Activated naive CD4-positive, alpha-beta T cell treated with anti-CD3 and anti-CD28 coated beads for 36 hours (primary cell): ENCODE measurements at regions of chr14 and their contacts with region 1.

Region 1: GRCh38 chr14:32202998-32203882 is at the start of gene RNU6-8:
- DNase-seq: peak; percentile 86
- H3K4me3 Mint-ChIP-seq: peak within 1 kb of the TSS; percentile 89
- H3K27ac Mint-ChIP-seq: peak within 1 kb of the TSS; percentile 99
- H3K4me1 Mint-ChIP-seq: peaks cover 35% of the 10 kb centered on the region
- H3K27me3 Mint-ChIP-seq: no peaks in the 10 kb centered on the region
- total RNA-seq, gene RNU6-8: not detected

Region 2: GRCh38 chr14:31388687-31389413 is 814.4 kb before region 1 on chr14:
- CTCF ChIA-PET with region 1: no interaction called
- intact Hi-C with region 1: loop called (anchors 10 kb)
- DNase-seq: peak; percentile 17
- H3K4me3 Mint-ChIP-seq: no peak overlapping the region
- H3K27ac Mint-ChIP-seq: no peak overlapping the region
- H3K4me1 Mint-ChIP-seq: peaks cover 25% of the 10 kb centered on the region
- H3K27me3 Mint-ChIP-seq: no peaks in the 10 kb centered on the region

Region 3: DNA sequence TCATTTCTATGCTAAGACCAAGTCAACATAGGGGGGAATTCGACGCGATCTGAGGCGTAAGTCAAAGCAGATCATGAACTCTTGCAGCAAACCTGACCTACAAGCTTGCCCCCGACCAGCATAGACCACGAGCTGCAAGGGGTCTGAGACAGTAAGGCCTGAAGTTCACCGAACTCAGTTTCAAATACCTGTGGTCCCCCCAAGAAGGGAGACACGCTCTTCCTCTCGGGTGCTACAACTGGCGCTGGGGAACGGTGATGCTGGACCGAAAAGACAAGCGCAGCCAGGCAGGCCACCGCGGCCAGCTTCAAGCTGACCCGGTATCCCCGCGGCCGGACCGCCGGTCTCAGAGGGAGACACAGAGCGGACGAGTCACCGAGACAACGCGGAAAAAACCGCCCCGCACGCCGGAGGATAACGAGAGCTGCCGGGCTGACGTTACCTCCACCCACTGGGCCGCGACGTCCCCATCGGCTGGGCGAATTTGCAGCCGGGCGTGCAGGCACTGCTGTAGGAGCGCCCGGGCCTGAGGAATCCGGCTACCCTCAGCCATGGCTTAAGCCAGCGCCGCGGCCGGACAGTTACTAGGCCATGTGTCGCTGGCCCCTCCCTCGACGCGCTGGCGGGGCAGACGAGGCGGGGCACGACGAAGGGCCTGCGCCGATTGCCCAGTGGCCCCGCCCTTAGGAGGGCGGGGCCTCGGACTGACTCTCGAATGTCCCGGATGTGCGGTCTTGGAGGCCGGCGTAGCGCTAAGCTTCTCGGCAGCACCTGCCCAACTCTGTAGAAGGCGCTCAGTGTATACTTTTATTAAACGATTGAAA is 746.2 kb before region 1 on chr14 and contains the start of gene DTD2:
- CTCF ChIA-PET with region 1: no interaction called
- intact Hi-C with region 1: loop called (anchors 1 kb)
- DNase-seq: peak; percentile 93
- H3K4me3 Mint-ChIP-seq: peak within 1 kb of the TSS; percentile 94
- H3K27ac Mint-ChIP-seq: peak within 1 kb of the TSS; percentile 88
- H3K4me1 Mint-ChIP-seq: peaks cover 29% of the 10 kb centered on the region
- H3K27me3 Mint-ChIP-seq: no peaks in the 10 kb centered on the region
- total RNA-seq, gene DTD2: 12.9 to 13.3 TPM

Region 4: GRCh38 chr14:31926123-31926522 is 277.1 kb before region 1 on chr14:
- CTCF ChIA-PET with region 1: interaction called, 3 read pairs
- intact Hi-C with region 1: loop called (anchors 1 kb)
- DNase-seq: peak; percentile 28
- H3K4me3 Mint-ChIP-seq: no peak overlapping the region
- H3K27ac Mint-ChIP-seq: no peak overlapping the region
- H3K4me1 Mint-ChIP-seq: peaks cover 21% of the 10 kb centered on the region
- H3K27me3 Mint-ChIP-seq: no peaks in the 10 kb centered on the region

Region 5: DNA sequence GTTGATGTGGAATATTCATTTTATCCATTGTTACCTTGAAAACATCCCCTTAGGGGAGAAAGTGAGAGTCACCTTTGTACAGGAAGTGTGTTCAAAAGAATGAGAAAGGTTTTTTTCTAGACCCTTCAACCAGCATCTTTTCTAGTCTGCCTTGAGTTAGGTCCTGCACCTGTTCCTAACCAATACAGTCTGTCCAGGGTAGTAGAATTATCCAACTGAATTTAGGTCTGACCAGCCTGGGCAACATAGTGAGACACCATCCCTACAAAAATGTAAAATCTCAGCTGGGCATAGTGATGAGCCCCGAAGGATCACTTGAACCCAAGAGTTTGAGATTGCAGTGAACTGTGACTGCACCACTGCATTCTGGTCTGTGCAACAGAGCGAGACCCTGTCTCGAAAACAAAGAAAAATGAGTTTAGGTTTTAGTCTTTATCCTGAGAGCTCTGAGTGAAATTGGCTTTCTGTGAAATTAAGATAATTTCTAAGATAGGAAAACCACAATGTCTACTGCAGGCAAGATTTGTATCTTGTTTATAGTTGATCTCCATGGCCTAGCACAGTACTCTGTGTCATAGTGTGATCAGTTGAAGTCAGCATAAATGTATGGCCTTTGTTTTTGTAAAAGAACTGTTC is 101.0 kb before region 1 on chr14:
- CTCF ChIA-PET with region 1: no interaction called
- intact Hi-C with region 1: loop called (anchors 1 kb)
- DNase-seq: peak; percentile 16
- H3K4me3 Mint-ChIP-seq: peak overlapping the region; percentile 5
- H3K27ac Mint-ChIP-seq: peak overlapping the region; percentile 71
- H3K4me1 Mint-ChIP-seq: peaks cover 40% of the 10 kb centered on the region
- H3K27me3 Mint-ChIP-seq: no peaks in the 10 kb centered on the region

Region 6: DNA sequence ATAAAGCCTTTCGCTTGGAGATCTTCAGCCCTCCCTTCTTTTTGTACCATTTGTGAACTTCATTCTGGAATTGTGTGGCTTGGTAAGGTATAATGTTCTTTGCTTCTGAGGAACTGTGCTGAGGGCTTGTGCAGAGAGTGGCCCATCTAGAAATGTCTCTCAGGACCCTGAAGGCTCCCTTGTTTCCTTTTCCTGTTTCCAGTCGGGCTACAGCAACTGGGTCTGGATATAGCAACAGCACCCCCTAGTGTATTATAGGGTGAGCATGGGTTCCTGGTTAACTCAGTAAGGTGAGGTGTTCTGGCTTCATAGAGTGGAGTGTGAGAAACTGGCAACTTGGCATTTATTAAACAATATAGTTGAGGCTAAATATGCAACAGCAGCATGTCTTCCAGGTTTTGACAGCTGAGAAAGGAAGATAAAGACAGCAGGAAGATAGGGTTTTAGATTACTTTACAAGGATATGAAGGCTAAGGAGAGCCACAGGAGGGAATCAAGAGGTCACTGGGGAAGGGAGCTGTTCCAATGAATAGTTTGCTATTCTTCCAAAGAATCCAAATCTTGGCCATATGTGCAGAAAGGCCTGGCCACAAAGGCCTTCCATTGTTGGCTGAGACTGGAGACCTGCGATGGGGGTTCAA is 48.9 kb after region 1 on chr14:
- CTCF ChIA-PET with region 1: interaction called, 17 read pairs
- intact Hi-C with region 1: loop called (anchors 1 kb)
- DNase-seq: peak; percentile 64
- H3K4me3 Mint-ChIP-seq: no peak overlapping the region
- H3K27ac Mint-ChIP-seq: no peak overlapping the region
- H3K4me1 Mint-ChIP-seq: no peaks in the 10 kb centered on the region
- H3K27me3 Mint-ChIP-seq: no peaks in the 10 kb centered on the region

Region 7: DNA sequence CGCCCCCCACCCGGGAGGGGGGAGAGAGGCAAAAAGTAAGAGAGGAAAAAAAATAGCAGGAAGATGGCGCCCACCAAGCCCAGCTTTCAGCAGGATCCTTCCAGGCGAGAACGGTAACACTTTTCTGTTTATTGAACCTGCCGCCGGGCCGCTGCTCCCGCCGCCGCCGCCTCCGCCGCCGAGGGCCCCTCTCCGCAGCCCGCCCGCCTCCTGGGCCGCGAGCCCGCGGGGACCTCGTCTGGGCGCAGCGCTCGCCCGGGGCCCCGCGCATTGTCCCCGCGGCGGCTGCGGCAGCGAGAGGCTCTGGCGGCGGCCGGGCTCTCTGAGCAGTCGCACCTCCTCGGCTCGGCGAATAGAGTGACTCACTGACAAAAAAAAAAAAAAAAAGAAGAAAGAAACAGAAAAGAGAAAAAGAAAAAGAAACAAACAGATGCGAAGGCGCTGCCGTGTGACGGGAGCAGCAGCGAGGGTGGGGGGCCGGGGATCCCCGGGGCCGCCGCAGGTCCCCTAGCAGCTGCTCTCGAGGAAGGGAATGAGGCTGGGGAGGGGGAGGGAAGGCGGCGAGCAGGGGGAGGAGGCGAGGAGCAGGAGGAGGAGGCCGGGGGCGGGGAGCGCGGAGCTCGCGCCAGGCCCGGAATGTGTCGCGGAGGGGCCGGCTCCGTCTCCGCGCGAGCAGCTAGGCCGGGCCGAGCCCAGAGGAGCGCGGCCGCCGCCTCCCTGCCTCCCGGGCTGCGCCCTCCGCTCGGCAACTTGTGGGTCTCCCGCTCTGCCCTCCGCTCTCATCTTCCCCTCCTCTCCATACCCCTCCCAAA is 736.2 kb after region 1 on chr14:
- CTCF ChIA-PET with region 1: no interaction called
- intact Hi-C with region 1: loop called (anchors 5 kb)
- DNase-seq: peak; percentile 60
- H3K4me3 Mint-ChIP-seq: peak overlapping the region; percentile 69
- H3K27ac Mint-ChIP-seq: no peak overlapping the region
- H3K4me1 Mint-ChIP-seq: peaks cover 11% of the 10 kb centered on the region
- H3K27me3 Mint-ChIP-seq: peaks cover 57% of the 10 kb centered on the region